WTC11 (cell line): ENCODE measurements at regions of chr5 and their contacts with region 1.

Region 1: DNA sequence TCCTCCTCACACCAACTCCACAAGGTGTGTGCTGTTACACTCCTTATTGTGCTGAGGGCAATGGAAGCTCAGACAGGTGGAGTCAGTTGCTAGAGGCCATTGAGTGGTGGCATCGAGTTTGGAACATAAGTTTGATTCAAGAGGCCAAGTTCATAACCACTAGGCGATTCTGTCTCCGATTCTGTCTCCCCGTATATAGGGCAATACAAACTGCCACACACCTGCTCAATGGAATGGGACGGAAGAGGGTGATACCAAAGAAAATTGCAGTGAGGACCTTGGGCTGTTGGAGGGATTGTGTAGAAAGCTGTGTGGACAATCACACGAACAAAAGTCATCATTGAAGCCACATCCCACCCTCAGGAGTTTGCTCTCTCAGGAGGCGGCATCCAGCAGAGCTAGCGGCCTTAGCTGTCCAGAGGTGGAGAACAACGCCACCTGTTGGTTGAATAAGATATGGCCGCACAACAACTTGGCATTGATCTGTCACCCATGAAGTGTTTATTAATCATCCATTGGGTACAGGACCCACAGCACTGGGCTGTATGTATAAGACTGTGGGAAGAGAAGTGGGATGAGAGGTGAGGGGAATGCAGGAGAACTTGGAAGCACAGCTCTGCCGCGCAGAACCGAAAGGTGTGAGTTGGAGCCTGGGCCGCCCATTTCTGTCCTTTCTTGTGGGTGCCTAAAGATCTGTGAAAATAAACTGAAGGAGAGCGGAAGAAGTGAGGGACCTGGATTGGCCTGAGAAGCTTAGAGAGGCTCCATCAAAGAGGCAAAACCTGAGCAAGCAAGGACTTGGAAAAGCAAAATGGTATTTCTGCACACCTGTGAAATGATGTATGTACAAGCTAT is 16.1 kb upstream of the NEUROG1 start:
- DNase-seq: peak; percentile 79
- ATAC-seq: peak; percentile 80
- H3K4me3 Mint-ChIP-seq: no peak overlapping the region
- H3K27ac Mint-ChIP-seq: no peak overlapping the region
- H3K4me1 Mint-ChIP-seq: 0 out of 2 replicates have a peak, but pooled peaks cover 3% of the 10 kb centered on the region
- H3K27me3 Mint-ChIP-seq: peaks cover 69% of the 10 kb centered on the region
- CTCF ChIP-seq: peak; percentile 63

Region 2: GRCh38 chr5:135488727-135489465 is 62.9 kb before region 1 on chr5:
- CTCF ChIA-PET with region 1: interaction called, 17 read pairs
- POLR2A ChIA-PET with region 1: no interaction called
- DNase-seq: peak; percentile 86
- ATAC-seq: peak; percentile 56
- H3K4me3 Mint-ChIP-seq: peak overlapping the region; percentile 81
- H3K27ac Mint-ChIP-seq: no peak overlapping the region
- H3K4me1 Mint-ChIP-seq: peaks cover 55% of the 10 kb centered on the region
- H3K27me3 Mint-ChIP-seq: no peaks in the 10 kb centered on the region; the same call in 1 of the 2 replicates
- CTCF ChIP-seq: no peak

Region 3: GRCh38 chr5:135729321-135729786 is 177.5 kb after region 1 on chr5:
- CTCF ChIA-PET with region 1: interaction called, 27 read pairs
- POLR2A ChIA-PET with region 1: no interaction called
- DNase-seq: no peak
- ATAC-seq: 0 out of 2 replicates have a peak, but pooled peaks have one; percentile 41
- H3K4me3 Mint-ChIP-seq: no peak overlapping the region
- H3K27ac Mint-ChIP-seq: no peak overlapping the region
- H3K4me1 Mint-ChIP-seq: peaks cover 11% of the 10 kb centered on the region
- H3K27me3 Mint-ChIP-seq: no peaks in the 10 kb centered on the region
- CTCF ChIP-seq: no peak

Region 4: DNA sequence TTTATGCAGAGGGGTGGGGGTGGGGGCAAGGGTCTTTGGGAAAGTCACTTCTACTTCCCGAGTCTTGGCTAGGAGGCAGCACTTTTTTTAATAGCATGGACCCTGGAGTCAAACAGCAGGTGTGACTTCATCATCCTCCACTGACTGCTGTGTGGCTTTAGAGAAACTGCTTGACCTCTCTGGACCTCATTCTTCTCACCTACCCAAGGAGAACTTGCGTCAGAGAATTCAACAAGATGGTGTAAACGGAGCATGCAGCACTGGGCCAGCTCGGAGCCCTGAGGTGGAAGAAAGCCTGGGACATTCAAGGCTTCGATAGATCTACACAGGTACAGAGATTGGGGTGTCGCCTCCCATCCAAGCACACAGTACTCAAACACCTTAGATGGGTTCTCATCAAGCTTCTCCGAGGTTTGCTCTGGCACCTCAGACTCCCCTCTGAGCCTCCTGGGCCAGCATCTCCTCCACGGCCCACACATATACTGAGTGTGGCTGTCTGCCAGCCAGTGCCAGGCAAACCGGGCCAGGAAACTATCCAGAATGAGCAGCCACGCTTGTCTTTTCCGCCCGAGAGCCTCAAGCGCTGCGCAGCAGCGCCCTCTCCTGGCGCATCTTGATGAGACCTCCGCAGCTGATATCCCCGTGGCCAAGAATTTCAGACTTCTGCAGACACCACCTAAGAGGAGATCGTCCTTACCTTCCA is 278.0 kb after region 1 on chr5:
- CTCF ChIA-PET with region 1: interaction called, 36 read pairs
- POLR2A ChIA-PET with region 1: no interaction called
- DNase-seq: peak; percentile 80
- ATAC-seq: peak; percentile 18
- H3K4me3 Mint-ChIP-seq: no peak overlapping the region
- H3K27ac Mint-ChIP-seq: no peak overlapping the region
- H3K4me1 Mint-ChIP-seq: 0 out of 2 replicates have a peak, but pooled peaks cover 2% of the 10 kb centered on the region
- H3K27me3 Mint-ChIP-seq: peaks cover 49% of the 10 kb centered on the region
- CTCF ChIP-seq: peak; percentile 92

Region 5: GRCh38 chr5:135834639-135835529 is 283.1 kb after region 1 on chr5 and contains the start of gene SLC25A48:
- CTCF ChIA-PET with region 1: interaction called, 36 read pairs
- POLR2A ChIA-PET with region 1: no interaction called
- DNase-seq: peak; percentile 87
- ATAC-seq: peak; percentile 93
- H3K4me3 Mint-ChIP-seq: peak within 1 kb of the TSS; percentile 84
- H3K27ac Mint-ChIP-seq: no peak within 1 kb of the TSS
- H3K4me1 Mint-ChIP-seq: 0 out of 2 replicates have a peak, but pooled peaks cover 2% of the 10 kb centered on the region
- H3K27me3 Mint-ChIP-seq: peaks cover 89% of the 10 kb centered on the region
- CTCF ChIP-seq: 0 out of 2 replicates have a peak, but pooled peaks have one; percentile 9
- total RNA-seq, gene SLC25A48: 0.76 to 1.1 TPM (median 1.1 TPM) in 3 replicates